Activated CD4-positive, alpha-beta T cell treated with anti-CD3 and anti-CD28 coated beads for 36 hours (primary cell): ENCODE measurements at regions of chr2 and their contacts with region 1.

Region 1: DNA sequence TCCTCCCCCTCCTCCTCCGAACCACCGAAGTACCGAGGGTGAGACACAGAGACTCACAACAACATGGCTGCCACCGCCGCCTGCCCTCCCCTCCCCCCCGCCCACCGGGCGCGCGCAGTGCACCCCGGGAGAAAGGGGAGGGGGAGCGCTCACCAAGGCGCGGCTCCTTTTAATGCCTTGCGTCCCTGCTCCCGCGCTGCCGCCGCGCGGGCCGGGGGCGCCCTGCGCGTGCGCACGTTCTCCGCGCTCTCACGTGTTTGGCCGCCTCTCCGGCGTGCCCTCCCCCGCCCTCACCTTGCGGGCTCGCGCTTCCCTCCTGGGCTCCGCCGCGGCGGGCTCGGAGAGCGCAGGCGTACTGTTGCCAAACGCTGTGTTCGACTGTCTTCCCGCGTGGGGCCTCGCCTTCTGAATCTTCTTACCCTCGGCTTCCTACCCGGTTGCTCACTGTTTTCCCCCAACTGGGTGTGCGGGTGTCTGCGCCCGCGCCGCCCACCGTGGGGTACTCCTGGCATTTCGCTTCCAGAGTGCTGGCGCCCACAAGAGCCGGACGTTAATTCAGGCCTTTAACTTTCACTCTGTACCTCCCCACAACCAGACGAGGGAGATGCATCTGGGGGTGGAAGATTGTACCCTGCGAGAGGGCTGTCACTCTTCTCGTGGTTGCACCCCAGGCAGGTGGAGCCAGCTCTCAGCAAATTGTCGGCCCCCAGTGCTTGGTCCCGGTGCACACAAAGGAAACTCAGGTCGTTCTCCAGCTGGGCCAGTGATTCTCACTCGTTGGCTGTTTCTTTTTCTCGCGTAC is at the start of gene PUM2:
- DNase-seq: peak; percentile 97
- ATAC-seq: peak; percentile 85
- H3K4me3 Mint-ChIP-seq: no peak within 1 kb of the TSS
- H3K27ac Mint-ChIP-seq: peak within 1 kb of the TSS; percentile 88
- H3K4me1 Mint-ChIP-seq: peaks cover 25% of the 10 kb centered on the region
- H3K27me3 Mint-ChIP-seq: no peaks in the 10 kb centered on the region
- total RNA-seq, gene PUM2: 78.4 to 112 TPM

Region 2: GRCh38 chr2:18560031-18560796 is 1790.7 kb before region 1 on chr2 and contains the start of gene RDH14:
- CTCF ChIA-PET with region 1: no interaction called
- POLR2A ChIA-PET with region 1: no interaction called
- intact Hi-C with region 1: loop called (anchors 2 to 10 kb)
- DNase-seq: peak; percentile 94
- ATAC-seq: peak; percentile 94
- H3K4me3 Mint-ChIP-seq: peak within 1 kb of the TSS; percentile 84
- H3K27ac Mint-ChIP-seq: peak within 1 kb of the TSS; percentile 90
- H3K4me1 Mint-ChIP-seq: peaks cover 32% of the 10 kb centered on the region
- H3K27me3 Mint-ChIP-seq: no peaks in the 10 kb centered on the region
- total RNA-seq, gene RDH14: 16.1 to 18.3 TPM

Region 3: DNA sequence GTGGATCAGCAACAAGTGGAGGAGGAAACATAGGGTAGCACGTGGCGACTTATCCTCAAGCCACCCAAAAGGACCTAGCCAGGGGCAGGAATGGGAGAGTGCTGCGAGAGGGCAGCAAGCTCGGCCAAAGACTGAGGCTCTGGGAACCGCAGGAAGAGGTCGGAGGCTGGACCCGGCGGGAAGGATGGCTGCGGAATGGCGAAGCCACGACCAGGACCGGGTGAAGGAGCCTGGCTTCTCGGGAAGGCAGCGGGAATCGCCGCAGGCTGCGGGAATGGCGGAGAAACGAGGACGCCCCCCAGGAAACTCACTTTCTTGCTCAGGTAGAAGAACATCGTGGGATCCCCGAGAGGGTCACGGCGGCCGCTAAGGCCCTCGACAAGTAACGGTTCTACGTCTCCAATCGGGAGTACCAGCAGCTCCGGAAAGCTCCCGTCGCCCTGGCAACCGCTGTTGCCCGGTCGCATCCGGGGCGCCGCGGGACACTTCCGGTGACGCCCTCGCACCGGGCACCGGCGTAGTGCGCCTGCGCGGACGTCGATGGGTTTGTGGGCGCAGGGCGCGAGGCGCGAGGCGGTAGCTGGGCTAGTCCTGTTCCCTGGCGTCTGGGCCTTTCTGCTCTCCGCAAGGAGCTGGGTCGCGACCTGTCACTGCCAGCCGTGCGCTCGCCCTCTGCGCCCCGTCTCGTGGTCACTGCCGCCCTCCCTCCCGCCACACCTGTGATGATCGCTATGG is 361.1 kb before region 1 on chr2 and contains the start of gene WDR35:
- CTCF ChIA-PET with region 1: no interaction called
- POLR2A ChIA-PET with region 1: no interaction called
- intact Hi-C with region 1: loop called in 1 of 2 experiments (anchors 5 kb)
- DNase-seq: peak; percentile 95
- ATAC-seq: peak; percentile 97
- H3K4me3 Mint-ChIP-seq: peak within 1 kb of the TSS; percentile 90
- H3K27ac Mint-ChIP-seq: peak within 1 kb of the TSS; percentile 75
- H3K4me1 Mint-ChIP-seq: peaks cover 28% of the 10 kb centered on the region
- H3K27me3 Mint-ChIP-seq: peaks cover 12% of the 10 kb centered on the region
- total RNA-seq, gene WDR35: 6.2 to 7.4 TPM

Region 4: GRCh38 chr2:20186078-20186854 is 164.7 kb before region 1 on chr2:
- CTCF ChIA-PET with region 1: no interaction called
- POLR2A ChIA-PET with region 1: no interaction called
- intact Hi-C with region 1: no loop called
- DNase-seq: no peak
- ATAC-seq: no peak
- H3K4me3 Mint-ChIP-seq: no peak overlapping the region
- H3K27ac Mint-ChIP-seq: no peak overlapping the region
- H3K4me1 Mint-ChIP-seq: no peaks in the 10 kb centered on the region
- H3K27me3 Mint-ChIP-seq: peaks cover 2% of the 10 kb centered on the region

Region 5: DNA sequence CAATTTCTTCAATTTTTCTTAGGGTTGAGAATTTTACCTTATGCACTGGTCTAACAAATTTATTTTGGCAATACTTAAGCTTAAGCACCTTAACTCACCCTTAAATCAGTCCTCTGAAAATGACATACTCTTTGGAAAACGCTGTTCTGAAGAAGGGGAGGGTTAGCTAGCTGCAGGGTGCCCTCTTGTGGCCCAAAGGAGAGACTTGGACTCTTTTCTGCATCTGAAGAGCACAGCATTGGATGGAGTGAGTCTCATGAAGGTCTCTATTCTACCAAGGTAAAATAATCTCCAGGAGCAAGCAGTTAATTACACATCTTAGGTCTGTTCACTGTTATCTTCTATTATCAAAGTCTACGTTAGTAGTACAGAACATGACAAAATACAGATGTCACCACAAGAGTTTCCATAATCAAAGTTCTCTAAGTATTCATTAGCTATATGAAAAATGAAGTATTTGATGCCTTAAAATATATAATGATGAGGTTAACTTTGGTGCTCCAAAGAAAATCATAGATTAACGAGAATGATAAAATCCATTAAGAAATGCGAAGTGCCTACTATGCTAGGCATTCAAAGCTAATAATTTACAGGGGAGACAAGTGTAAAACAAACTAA is 24.7 kb before region 1 on chr2:
- CTCF ChIA-PET with region 1: interaction called, 200 read pairs
- POLR2A ChIA-PET with region 1: interaction called, 10 read pairs
- intact Hi-C with region 1: loop called in 1 of 2 experiments (anchors 1 kb)
- DNase-seq: peak; percentile 71
- ATAC-seq: peak; percentile 90
- H3K4me3 Mint-ChIP-seq: no peak overlapping the region
- H3K27ac Mint-ChIP-seq: peak overlapping the region; percentile 7
- H3K4me1 Mint-ChIP-seq: peaks cover 80% of the 10 kb centered on the region
- H3K27me3 Mint-ChIP-seq: no peaks in the 10 kb centered on the region

Region 6: GRCh38 chr2:20365249-20365817 is 14.4 kb after region 1 on chr2:
- CTCF ChIA-PET with region 1: interaction called, 20 read pairs
- POLR2A ChIA-PET with region 1: interaction called, 4 read pairs
- intact Hi-C with region 1: loop called (anchors 1 kb)
- DNase-seq: peak; percentile 80
- ATAC-seq: peak; percentile 69
- H3K4me3 Mint-ChIP-seq: peak overlapping the region; percentile 3
- H3K27ac Mint-ChIP-seq: peak overlapping the region; percentile 86
- H3K4me1 Mint-ChIP-seq: peaks cover 26% of the 10 kb centered on the region
- H3K27me3 Mint-ChIP-seq: peaks cover 13% of the 10 kb centered on the region

Region 7: DNA sequence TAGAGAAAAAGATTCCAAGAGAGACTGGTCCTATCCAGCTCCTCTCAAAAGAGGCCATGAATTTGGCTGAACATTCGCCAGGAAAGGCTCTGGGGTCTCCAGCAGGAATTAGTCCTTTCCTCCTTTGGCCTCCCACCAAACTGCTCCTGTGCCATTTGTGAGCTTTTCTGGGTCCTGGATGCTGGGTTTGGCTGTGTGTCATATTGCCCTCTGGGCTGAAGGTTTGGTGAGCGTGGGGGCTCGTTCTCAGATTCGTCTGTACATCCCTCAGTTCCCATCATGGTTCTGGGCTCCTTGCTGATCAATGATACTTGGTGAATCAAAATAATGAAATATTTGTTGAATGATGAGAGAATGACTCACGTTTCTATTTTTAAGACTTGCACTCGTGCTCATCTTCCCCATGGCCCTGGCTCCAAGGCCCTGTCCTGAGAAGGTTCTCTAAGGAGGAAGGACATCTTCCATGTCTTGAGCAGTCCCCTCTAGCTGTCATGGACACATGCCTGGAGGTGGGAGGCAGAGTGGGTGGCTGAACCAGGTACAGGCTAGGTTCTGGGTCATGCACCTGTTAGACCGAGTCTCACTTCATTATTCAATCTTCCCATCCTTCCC is 48.1 kb after region 1 on chr2:
- CTCF ChIA-PET with region 1: no interaction called
- POLR2A ChIA-PET with region 1: no interaction called
- intact Hi-C with region 1: no loop called
- DNase-seq: no peak
- ATAC-seq: no peak
- H3K4me3 Mint-ChIP-seq: no peak overlapping the region
- H3K27ac Mint-ChIP-seq: no peak overlapping the region
- H3K4me1 Mint-ChIP-seq: no peaks in the 10 kb centered on the region
- H3K27me3 Mint-ChIP-seq: peaks cover 2% of the 10 kb centered on the region

Region 8: DNA sequence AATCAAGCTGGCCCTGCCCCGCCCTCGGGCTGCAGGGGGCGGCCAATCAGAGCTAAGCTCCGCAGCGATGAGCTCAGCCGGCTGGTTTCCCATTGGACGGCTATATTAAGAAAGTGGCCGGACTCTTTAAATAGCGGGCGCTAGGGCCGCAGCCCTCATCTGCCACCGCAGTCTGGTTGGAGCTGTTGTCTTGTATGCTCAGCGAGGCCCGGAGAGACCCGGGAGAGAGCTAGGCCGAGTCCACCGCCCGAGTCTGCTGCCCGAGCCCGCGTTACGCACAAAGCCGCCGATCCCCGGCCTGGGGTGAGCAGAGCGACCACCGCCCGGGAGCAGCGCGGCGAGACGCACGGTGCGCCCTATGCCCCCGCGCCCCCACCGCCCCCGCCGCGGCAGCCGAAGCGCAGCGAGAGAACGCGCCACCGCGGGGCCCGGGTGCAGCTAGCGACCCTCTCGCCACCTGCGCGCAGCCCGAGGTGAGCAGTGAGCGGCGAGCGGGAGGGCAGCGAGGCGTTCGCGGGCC is 96.0 kb after region 1 on chr2 and contains the start of gene RHOB:
- CTCF ChIA-PET with region 1: no interaction called
- POLR2A ChIA-PET with region 1: interaction called, 5 read pairs
- intact Hi-C with region 1: loop called (anchors 1 to 2 kb)
- DNase-seq: peak; percentile 93
- ATAC-seq: peak; percentile 99
- H3K4me3 Mint-ChIP-seq: peak within 1 kb of the TSS; percentile 71
- H3K27ac Mint-ChIP-seq: no peak within 1 kb of the TSS
- H3K4me1 Mint-ChIP-seq: no peaks in the 10 kb centered on the region
- H3K27me3 Mint-ChIP-seq: peaks cover 23% of the 10 kb centered on the region
- total RNA-seq, gene RHOB: 7.5 TPM

Region 9: DNA sequence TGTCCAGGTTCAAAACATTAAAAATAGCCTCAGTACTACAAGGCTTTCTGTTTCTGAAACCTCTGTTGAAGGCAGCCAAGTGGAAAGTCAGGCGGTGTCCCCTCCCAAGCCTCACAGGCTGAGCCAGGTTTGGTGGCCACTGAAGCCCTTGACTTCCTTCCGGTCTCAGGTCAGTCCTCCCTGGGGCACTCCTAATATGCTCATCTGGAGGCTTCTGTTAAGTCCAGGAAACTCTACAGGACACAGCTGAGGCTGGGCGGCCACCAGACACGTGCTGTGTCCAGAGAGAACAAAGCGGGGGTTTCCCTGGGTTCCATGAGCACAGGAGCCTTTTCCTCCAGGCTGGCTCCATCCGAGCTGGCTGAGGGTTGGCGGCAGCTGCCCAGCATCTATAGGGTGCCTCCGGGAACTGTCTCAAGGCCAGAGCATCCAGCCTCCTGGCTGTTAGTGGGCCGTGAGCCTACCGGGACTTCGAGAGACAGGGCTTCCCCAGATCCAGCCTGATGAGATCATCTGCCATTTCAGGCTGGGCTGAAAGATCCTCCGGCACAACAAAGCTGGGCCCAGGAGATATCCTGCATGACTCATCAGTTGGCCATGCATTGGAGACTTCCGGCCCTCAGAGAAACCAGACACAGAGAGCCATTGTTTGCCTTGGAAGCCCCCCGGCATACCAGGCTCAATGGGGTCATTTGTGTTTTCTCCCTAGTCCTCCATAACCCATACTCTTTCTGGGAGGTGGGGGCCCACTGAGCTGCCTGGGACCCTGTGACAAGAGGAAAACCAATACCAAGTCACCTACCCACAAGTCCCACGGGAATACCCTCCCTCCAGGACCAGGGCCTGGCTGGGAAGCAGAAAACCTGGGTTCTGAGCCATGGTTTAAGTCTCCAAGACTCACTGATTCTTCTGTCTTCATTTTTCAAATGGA is 228.2 kb after region 1 on chr2:
- CTCF ChIA-PET with region 1: no interaction called
- POLR2A ChIA-PET with region 1: no interaction called
- intact Hi-C with region 1: no loop called
- DNase-seq: no peak
- ATAC-seq: no peak
- H3K4me3 Mint-ChIP-seq: no peak overlapping the region
- H3K27ac Mint-ChIP-seq: no peak overlapping the region
- H3K4me1 Mint-ChIP-seq: peaks cover 15% of the 10 kb centered on the region
- H3K27me3 Mint-ChIP-seq: no peaks in the 10 kb centered on the region

Region 10: GRCh38 chr2:20822535-20823490 is 471.9 kb after region 1 on chr2 and contains the start of gene LDAH:
- CTCF ChIA-PET with region 1: no interaction called
- POLR2A ChIA-PET with region 1: no interaction called
- intact Hi-C with region 1: loop called in 1 of 2 experiments (anchors 2 kb)
- DNase-seq: peak; percentile 92
- ATAC-seq: peak; percentile 79
- H3K4me3 Mint-ChIP-seq: peak within 1 kb of the TSS; percentile 98
- H3K27ac Mint-ChIP-seq: peak within 1 kb of the TSS; percentile 99
- H3K4me1 Mint-ChIP-seq: peaks cover 26% of the 10 kb centered on the region
- H3K27me3 Mint-ChIP-seq: no peaks in the 10 kb centered on the region
- total RNA-seq, gene LDAH: 27.0 to 32.8 TPM